WTC11 (cell line): ENCODE measurements at regions of chr10 and their contacts with region 1.

Region 1: GRCh38 chr10:106765241-106765754 is 399.2 kb downstream of the SORCS1 start:
- DNase-seq: peak; percentile 25
- ATAC-seq: peak; percentile 69
- H3K4me3 Mint-ChIP-seq: no peak overlapping the region
- H3K27ac Mint-ChIP-seq: no peak overlapping the region
- H3K4me1 Mint-ChIP-seq: peaks cover 16% of the 10 kb centered on the region
- H3K27me3 Mint-ChIP-seq: no peaks in the 10 kb centered on the region
- CTCF ChIP-seq: no peak

Region 2: GRCh38 chr10:106705681-106706100 is 59.6 kb before region 1 on chr10:
- CTCF ChIA-PET with region 1: interaction called, 24 read pairs
- POLR2A ChIA-PET with region 1: no interaction called
- DNase-seq: peak; percentile 68
- ATAC-seq: peak; percentile 66
- H3K4me3 Mint-ChIP-seq: no peak overlapping the region
- H3K27ac Mint-ChIP-seq: no peak overlapping the region
- H3K4me1 Mint-ChIP-seq: peaks cover 46% of the 10 kb centered on the region
- H3K27me3 Mint-ChIP-seq: no peaks in the 10 kb centered on the region; the same call in 1 of the 2 replicates
- CTCF ChIP-seq: peak; percentile 78

Region 3: GRCh38 chr10:106740071-106740470 is 25.2 kb before region 1 on chr10:
- CTCF ChIA-PET with region 1: no interaction called
- POLR2A ChIA-PET with region 1: no interaction called
- DNase-seq: no peak
- ATAC-seq: no peak
- H3K4me3 Mint-ChIP-seq: no peak overlapping the region
- H3K27ac Mint-ChIP-seq: no peak overlapping the region
- H3K4me1 Mint-ChIP-seq: peaks cover 7% of the 10 kb centered on the region
- H3K27me3 Mint-ChIP-seq: no peaks in the 10 kb centered on the region
- CTCF ChIP-seq: no peak